SK-N-SH (cell line): ENCODE measurements at regions of chr5 and their contacts with region 1.

Region 1: DNA sequence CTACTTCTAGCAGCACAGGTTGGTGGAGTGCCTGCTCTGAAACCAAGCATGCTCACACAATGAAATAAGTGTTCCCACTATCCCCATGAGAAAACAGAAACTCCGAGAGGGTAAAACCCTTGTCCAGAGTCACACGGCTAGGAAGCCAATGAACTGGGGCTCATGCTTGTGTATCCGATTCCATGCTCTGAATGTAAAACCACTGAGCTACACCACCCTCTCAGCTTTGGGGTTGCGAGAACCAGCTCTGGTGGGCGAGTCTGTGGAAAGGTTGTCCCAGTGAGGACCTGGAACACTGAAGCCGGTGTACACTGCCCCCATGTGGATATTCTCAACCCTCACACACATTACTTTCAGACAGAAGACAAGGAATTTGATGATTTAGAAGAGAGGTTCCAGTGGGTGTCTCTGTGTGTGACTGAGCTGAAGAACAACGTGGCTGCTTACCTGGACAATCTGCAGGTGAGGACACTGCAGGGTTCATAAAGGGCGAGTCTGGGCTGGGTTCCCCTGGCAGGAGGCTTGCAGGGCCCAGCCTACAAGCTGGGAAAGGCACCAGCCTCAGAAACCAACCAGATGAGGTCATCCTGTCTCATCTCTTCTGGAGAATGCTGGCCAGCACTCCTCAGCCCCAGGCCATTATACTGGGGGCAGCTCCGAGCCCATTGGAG is 37.4 kb downstream of the ARHGEF37 start:
- DNase-seq: peak; percentile 78
- H3K4me3 ChIP-seq: no peak overlapping the region; a peak in 1 of 4 replicates
- H3K27ac ChIP-seq: no peak overlapping the region
- H3K4me1 ChIP-seq: peaks cover 5 to 14% of the 10 kb centered on the region in 2 experiments; a peak in 1 of 4 replicates
- H3K27me3 ChIP-seq: no peaks in the 10 kb centered on the region
- CTCF ChIP-seq: peak; percentile 79
- EP300 ChIP-seq: no peak
- RAD21 ChIP-seq: peak; percentile 80

Region 2: DNA sequence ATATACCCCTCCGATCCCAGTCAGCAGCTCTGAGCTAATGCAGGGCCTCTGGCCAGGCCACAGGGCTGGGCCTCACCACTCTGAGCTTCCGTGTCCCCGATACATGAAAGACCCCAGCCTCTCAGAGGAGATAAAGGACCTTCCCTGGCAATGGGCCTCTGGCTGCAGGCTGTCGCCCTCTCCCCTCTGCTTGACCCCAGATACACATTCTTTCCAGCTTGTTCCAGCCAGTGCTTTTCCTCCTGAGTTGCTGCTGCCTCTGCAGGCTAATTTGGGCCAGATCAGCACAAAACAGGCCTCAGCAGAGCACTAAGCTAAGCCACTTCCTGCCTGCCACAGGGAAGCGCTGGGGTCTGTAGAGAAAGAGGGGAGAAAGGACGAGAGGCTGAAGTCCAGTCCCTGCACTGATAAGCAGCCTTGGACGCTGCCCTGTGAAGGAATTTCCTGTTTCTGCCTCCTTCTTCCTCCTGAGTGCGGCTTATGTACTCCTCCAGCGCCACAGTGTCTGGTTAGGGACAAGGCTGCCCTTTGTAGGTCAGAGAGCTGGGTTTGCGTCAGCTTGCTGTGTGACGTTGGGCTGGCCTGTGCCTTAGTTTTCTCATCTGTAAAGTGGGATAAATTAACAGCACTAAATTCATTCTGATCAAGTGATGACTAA is 166.6 kb before region 1 on chr5:
- CTCF ChIA-PET with region 1: interaction called, 12 read pairs
- POLR2A ChIA-PET with region 1: no interaction called
- DNase-seq: peak; percentile 37
- H3K4me3 ChIP-seq: no peak overlapping the region
- H3K27ac ChIP-seq: peak overlapping the region; percentile 61 to 93
- H3K4me1 ChIP-seq: peaks cover 17 to 38% of the 10 kb centered on the region in 2 experiments
- H3K27me3 ChIP-seq: no peaks in the 10 kb centered on the region
- CTCF ChIP-seq: no peak
- EP300 ChIP-seq: no peak; a peak in 1 of 4 replicates
- RAD21 ChIP-seq: no peak

Region 3: GRCh38 chr5:149475777-149476176 is 142.9 kb before region 1 on chr5:
- CTCF ChIA-PET with region 1: no interaction called
- POLR2A ChIA-PET with region 1: no interaction called
- DNase-seq: no peak
- H3K4me3 ChIP-seq: no peak overlapping the region
- H3K27ac ChIP-seq: no peak overlapping the region
- H3K4me1 ChIP-seq: no peaks in the 10 kb centered on the region
- H3K27me3 ChIP-seq: no peaks in the 10 kb centered on the region
- CTCF ChIP-seq: no peak
- EP300 ChIP-seq: no peak
- RAD21 ChIP-seq: no peak

Region 4: GRCh38 chr5:149581192-149581861 is 37.4 kb before region 1 on chr5 and contains the start of gene ARHGEF37:
- CTCF ChIA-PET with region 1: interaction called, 12 read pairs
- POLR2A ChIA-PET with region 1: no interaction called
- DNase-seq: peak; percentile 87
- H3K4me3 ChIP-seq: peak within 1 kb of the TSS; percentile 52 to 58
- H3K27ac ChIP-seq: peak within 1 kb of the TSS in 1 of 2 experiments; percentile 73; a peak in 2 of 4 replicates
- H3K4me1 ChIP-seq: peaks cover 0 to 15% of the 10 kb centered on the region in 2 experiments; a peak in 2 of 4 replicates
- H3K27me3 ChIP-seq: no peaks in the 10 kb centered on the region
- CTCF ChIP-seq: no peak
- EP300 ChIP-seq: no peak
- RAD21 ChIP-seq: no peak
- polyA plus RNA-seq, gene ARHGEF37: 0.94 and 1.3 TPM in 2 replicates

Region 5: GRCh38 chr5:149586791-149587283 is 31.9 kb before region 1 on chr5:
- CTCF ChIA-PET with region 1: interaction called, 12 read pairs
- POLR2A ChIA-PET with region 1: no interaction called
- DNase-seq: peak; percentile 34
- H3K4me3 ChIP-seq: no peak overlapping the region
- H3K27ac ChIP-seq: peak overlapping the region in 1 of 2 experiments; percentile 14; a peak in 1 of 4 replicates
- H3K4me1 ChIP-seq: peaks cover 3 to 9% of the 10 kb centered on the region in 2 experiments; a peak in 3 of 4 replicates
- H3K27me3 ChIP-seq: no peaks in the 10 kb centered on the region
- CTCF ChIP-seq: no peak
- EP300 ChIP-seq: no peak
- RAD21 ChIP-seq: no peak

Region 6: DNA sequence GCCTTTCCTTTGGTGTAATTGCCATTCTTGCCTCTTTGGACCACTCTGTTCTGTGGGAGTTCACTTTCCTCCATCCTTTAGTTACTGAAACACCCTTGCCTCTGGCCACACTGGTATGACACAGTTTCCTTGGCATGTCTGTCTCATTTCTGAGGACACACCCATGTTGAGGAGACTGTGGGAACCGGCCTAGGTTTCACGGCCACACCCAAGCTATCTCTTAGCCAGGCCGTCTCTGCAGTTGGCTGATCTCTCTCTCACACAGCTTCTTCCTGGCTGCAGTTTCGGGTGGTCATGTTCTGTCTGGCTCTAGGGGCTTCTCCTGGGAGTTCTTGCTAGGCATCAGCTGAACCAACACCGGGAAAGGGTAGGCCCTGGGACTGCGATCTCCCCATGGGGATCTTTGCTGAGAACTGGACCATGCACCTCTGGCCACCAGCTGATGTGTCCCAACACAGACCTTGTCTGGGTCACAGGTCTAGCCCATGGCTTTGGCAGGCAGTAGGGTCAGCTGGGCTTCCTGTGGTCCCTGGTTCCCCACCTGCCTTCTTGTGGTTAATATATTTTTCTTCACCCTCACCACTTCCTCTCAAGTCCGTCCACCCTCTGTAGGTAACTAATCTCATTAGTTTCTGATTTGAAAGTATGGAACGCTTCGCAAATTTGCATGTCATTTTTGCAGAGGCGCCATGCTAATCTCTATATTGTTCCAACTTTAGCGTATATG is 12.6 kb before region 1 on chr5:
- CTCF ChIA-PET with region 1: interaction called, 28 read pairs
- POLR2A ChIA-PET with region 1: no interaction called
- DNase-seq: no peak
- H3K4me3 ChIP-seq: no peak overlapping the region
- H3K27ac ChIP-seq: no peak overlapping the region
- H3K4me1 ChIP-seq: no peaks in the 10 kb centered on the region
- H3K27me3 ChIP-seq: no peaks in the 10 kb centered on the region
- CTCF ChIP-seq: no peak
- EP300 ChIP-seq: no peak
- RAD21 ChIP-seq: no peak

Region 7: GRCh38 chr5:149636851-149637246 is 18.1 kb after region 1 on chr5:
- CTCF ChIA-PET with region 1: interaction called, 18 read pairs
- POLR2A ChIA-PET with region 1: no interaction called
- DNase-seq: peak; percentile 81
- H3K4me3 ChIP-seq: peak overlapping the region in 1 of 2 experiments; percentile 43; a peak in 1 of 4 replicates
- H3K27ac ChIP-seq: no peak overlapping the region
- H3K4me1 ChIP-seq: peaks cover 0 to 12% of the 10 kb centered on the region in 2 experiments; a peak in 1 of 4 replicates
- H3K27me3 ChIP-seq: no peaks in the 10 kb centered on the region
- CTCF ChIP-seq: peak; percentile 84
- EP300 ChIP-seq: no peak
- RAD21 ChIP-seq: peak; percentile 99

Region 8: GRCh38 chr5:149680810-149681221 is 62.1 kb after region 1 on chr5:
- CTCF ChIA-PET with region 1: no interaction called
- POLR2A ChIA-PET with region 1: no interaction called
- DNase-seq: no peak
- H3K4me3 ChIP-seq: no peak overlapping the region
- H3K27ac ChIP-seq: no peak overlapping the region
- H3K4me1 ChIP-seq: no peaks in the 10 kb centered on the region
- H3K27me3 ChIP-seq: no peaks in the 10 kb centered on the region; the same call in 1 of the 2 replicates
- CTCF ChIP-seq: no peak
- EP300 ChIP-seq: no peak
- RAD21 ChIP-seq: no peak

Region 9: DNA sequence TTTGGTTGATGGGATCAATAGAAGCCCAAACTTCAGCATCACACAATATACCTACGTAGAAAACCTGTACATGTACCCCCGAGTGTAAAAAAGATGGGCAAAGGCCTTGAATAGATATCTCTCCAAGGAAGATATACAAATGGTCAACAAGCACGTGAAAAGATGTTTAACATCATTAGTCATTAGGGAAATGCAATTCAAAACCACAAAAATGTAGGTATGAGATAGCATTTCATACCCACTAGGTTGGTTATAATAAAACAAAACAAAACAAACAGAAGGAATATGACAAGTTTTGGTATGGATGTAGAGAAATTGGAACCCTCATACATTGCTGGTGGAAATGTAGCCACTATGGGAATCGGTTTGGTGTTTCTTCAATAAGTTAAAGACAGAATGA is 78.3 kb after region 1 on chr5:
- CTCF ChIA-PET with region 1: no interaction called
- POLR2A ChIA-PET with region 1: no interaction called
- DNase-seq: no peak
- H3K4me3 ChIP-seq: no peak overlapping the region
- H3K27ac ChIP-seq: no peak overlapping the region
- H3K4me1 ChIP-seq: no peaks in the 10 kb centered on the region; a peak in 1 of 4 replicates
- H3K27me3 ChIP-seq: peaks cover 7% of the 10 kb centered on the region; the same call in 1 of the 2 replicates
- CTCF ChIP-seq: no peak
- EP300 ChIP-seq: no peak
- RAD21 ChIP-seq: no peak

Region 10: GRCh38 chr5:149969181-149969930 is 350.6 kb after region 1 on chr5:
- CTCF ChIA-PET with region 1: no interaction called
- POLR2A ChIA-PET with region 1: no interaction called
- DNase-seq: no peak
- H3K4me3 ChIP-seq: no peak overlapping the region
- H3K27ac ChIP-seq: no peak overlapping the region
- H3K4me1 ChIP-seq: no peaks in the 10 kb centered on the region
- H3K27me3 ChIP-seq: no peaks in the 10 kb centered on the region
- CTCF ChIP-seq: no peak
- EP300 ChIP-seq: no peak
- RAD21 ChIP-seq: no peak